ENCODE measurements at regions of chr1 and their contacts with region 1.

Region 1: DNA sequence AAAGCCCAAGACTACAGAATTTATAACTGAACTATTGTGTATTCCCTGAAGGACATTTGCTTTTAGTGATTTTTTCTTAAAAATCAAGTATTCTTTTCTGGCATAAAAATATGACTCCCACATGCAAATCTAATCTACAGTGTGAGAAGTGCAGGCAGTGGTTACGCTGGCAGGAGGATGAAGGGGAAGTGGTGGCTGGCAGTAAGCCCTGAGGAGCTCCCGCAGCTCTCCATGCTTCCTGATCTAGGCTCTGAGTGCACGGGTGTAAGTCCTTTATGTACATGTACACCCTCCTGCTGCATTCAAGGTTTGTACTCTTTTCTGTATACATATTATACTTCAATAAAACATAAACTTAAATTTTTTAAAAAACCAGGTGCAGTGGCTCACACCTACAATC is 67.5 kb upstream of the PRDX6 start:
- DNase-seq: peak; percentile 45 to 70 (median 68)
- ATAC-seq: peak; percentile 64 to 78
- H3K4me3 ChIP-seq: no peak overlapping the region
- H3K27ac ChIP-seq: no peak overlapping the region
- H3K4me1 ChIP-seq: peaks cover 4% of the 10 kb centered on the region
- H3K27me3 ChIP-seq: no peaks in the 10 kb centered on the region

Region 2: DNA sequence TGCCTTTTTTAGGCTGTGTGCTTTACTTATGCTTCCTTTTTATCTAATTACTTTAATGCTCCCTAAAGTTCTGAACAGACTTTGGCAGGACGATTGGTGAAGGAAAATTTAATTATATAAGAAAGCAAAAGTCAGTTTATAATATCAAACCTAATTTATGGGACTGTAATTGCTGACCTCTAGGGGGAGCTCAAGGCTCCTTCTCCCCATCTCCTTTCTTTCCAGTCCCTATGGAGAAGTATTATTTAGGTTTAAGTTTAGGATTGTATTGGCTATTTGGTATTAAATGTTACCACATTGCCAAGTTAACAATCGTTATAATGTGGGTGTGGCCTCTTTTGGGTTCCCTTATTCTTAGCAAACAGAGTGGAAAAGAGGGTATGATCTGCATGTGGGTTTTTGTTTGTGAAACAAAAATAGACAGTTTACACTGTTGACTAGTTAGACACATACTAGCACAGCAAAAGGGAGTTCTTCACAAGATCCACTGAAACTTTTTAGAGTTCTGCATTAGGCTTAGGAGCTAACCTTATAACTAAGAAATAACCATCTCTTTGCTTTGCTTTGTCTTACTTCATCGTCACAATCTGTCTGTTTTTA is 154.3 kb before region 1 on chr1:
- intact Hi-C with region 1: loop called in 1 of 4 experiments (anchors 10 kb)
- DNase-seq: no peak
- ATAC-seq: no peak
- H3K4me3 ChIP-seq: no peak overlapping the region
- H3K27ac ChIP-seq: no peak overlapping the region
- H3K4me1 ChIP-seq: peaks cover 5% of the 10 kb centered on the region
- H3K27me3 ChIP-seq: no peaks in the 10 kb centered on the region

Region 3: GRCh38 chr1:173476664-173477285 is 67.2 kb after region 1 on chr1:
- intact Hi-C with region 1: no loop called
- DNase-seq: peak; percentile 92 to 97 (median 97)
- ATAC-seq: peak; percentile 91 to 93
- H3K4me3 ChIP-seq: peak overlapping the region; percentile 71
- H3K27ac ChIP-seq: peak overlapping the region; percentile 96
- H3K4me1 ChIP-seq: peaks cover 4% of the 10 kb centered on the region
- H3K27me3 ChIP-seq: no peaks in the 10 kb centered on the region

Region 4: DNA sequence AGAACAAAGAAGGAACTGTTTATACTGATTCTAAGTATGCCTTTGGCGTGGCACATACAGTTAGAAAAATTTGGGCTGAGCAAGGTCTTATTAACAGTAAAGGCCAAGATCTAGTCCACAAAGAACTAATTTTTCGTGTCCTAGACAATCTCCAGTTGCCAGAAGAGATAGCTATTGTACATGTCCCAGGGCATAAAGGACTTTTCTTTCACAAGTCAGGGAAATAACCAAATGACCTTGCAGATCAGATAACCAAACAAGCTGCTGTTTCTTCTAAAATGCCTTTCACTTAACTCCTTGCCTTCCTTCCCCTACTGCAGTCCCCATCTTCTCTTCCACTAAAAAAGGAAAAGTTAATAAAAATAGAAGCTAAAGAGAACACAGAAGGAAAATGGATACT is 229.5 kb after region 1 on chr1:
- intact Hi-C with region 1: no loop called
- DNase-seq: no peak
- ATAC-seq: peak; percentile 16 to 57
- H3K4me3 ChIP-seq: no peak overlapping the region
- H3K27ac ChIP-seq: no peak overlapping the region
- H3K4me1 ChIP-seq: no peaks in the 10 kb centered on the region
- H3K27me3 ChIP-seq: no peaks in the 10 kb centered on the region